IMR-90 (cell line): ENCODE measurements at regions of chr13 and their contacts with region 1.

Region 1: DNA sequence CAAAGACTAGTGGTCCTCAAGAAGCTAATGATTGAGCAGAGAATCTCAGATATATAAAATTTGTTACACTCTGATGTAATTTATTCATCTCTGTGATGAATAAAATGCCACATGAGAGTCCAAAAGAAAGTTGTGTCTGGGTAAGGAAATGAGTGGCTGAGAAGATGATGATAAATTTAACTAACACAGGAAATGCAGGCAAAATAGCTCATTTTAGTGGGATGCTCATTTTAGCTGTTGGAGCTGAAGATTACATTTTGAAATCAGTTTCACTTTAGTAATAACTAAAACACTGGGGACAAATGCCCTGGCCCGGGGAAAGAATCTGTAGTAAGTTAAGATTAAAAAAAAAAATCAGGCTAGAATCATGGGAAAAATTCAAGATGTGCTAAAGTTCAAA is 35.2 kb downstream of the SPRY2 start:
- DNase-seq: no peak
- ATAC-seq: no peak
- H3K4me3 ChIP-seq: no peak overlapping the region
- H3K27ac ChIP-seq: no peak overlapping the region
- H3K4me1 ChIP-seq: peaks cover 2% of the 10 kb centered on the region; the same call in 1 of the 2 replicates
- H3K27me3 ChIP-seq: no peaks in the 10 kb centered on the region
- CTCF ChIP-seq: no peak
- POLR2A ChIP-seq: no peak
- RAD21 ChIP-seq: no peak

Region 2: DNA sequence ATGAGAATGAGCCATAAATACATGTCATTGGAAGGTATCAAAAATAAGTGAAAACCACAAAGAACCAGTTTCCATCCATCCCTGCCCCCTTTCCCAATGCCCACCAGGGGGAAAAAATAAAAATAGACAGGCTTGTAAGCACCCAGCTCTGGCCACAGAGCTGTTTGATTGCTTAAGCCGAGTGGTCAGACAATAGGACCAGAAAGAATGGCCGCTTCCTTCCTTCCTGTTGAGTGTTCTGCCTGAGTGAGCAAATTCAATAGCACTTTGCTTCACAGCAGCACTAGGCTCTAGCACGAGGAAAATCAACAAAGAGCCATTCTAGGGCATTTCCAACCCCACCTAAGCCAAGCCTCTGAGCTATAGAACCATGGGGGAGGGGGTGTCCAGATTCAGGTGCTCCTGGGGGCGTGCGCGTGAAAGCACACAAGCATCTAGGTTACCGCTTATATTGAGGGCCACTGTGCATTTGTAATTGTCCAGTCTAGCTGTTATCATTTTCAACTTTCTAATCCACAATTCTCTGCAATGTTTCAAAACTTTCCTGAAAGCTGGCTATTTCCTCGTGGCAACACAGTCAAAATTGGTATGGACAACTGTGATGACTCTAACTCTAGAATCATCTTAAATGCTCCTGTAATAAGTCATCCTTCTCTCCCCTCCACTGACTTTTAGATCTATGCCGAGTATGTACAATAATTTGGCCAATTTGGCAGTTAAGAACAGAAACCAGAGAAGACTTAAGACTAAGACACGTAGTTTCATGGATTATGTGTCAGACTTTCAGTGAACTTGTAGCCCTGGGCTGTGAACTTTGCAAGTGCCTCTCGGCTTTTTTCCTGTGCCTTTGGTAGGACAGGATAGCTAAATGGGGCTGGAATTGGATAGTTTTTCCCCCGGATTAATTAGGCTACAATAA is 29.1 kb before region 1 on chr13:
- CTCF ChIA-PET with region 1: interaction called, 10 read pairs
- POLR2A ChIA-PET with region 1: no interaction called
- dilution Hi-C with region 1: no loop called
- in situ Hi-C with region 1: no loop called
- intact Hi-C with region 1: no loop called
- DNase-seq: peak; percentile 23
- ATAC-seq: no peak
- H3K4me3 ChIP-seq: no peak overlapping the region
- H3K27ac ChIP-seq: no peak overlapping the region
- H3K4me1 ChIP-seq: no peaks in the 10 kb centered on the region
- H3K27me3 ChIP-seq: no peaks in the 10 kb centered on the region
- CTCF ChIP-seq: no peak
- POLR2A ChIP-seq: no peak
- RAD21 ChIP-seq: no peak